MCF 10A (cell line): ENCODE measurements at regions of chr2 and their contacts with region 1.

Region 1: GRCh38 chr2:173571021-173571882 is 216.6 kb downstream of the CDCA7 start:
- DNase-seq: peak; percentile 54
- H3K4me3 Mint-ChIP-seq: no peak overlapping the region
- H3K27ac Mint-ChIP-seq: no peak overlapping the region
- H3K4me1 Mint-ChIP-seq: peaks cover 15% of the 10 kb centered on the region
- H3K27me3 Mint-ChIP-seq: no peaks in the 10 kb centered on the region
- CTCF ChIP-seq: peak; percentile 47

Region 2: GRCh38 chr2:173402405-173402974 is 168.8 kb before region 1 on chr2:
- CTCF ChIA-PET with region 1: interaction called, 14 read pairs
- POLR2A ChIA-PET with region 1: interaction called, 7 read pairs
- intact Hi-C with region 1: loop called (anchors 1 kb)
- DNase-seq: peak; percentile 87
- H3K4me3 Mint-ChIP-seq: peak overlapping the region; percentile 6
- H3K27ac Mint-ChIP-seq: no peak overlapping the region
- H3K4me1 Mint-ChIP-seq: peaks cover 11% of the 10 kb centered on the region
- H3K27me3 Mint-ChIP-seq: peaks cover 64% of the 10 kb centered on the region
- CTCF ChIP-seq: peak; percentile 86

Region 3: GRCh38 chr2:173667417-173667816 is 96.2 kb after region 1 on chr2:
- CTCF ChIA-PET with region 1: interaction called, 3 read pairs
- POLR2A ChIA-PET with region 1: no interaction called
- intact Hi-C with region 1: loop called (anchors 1 kb)
- DNase-seq: peak; percentile 65
- H3K4me3 Mint-ChIP-seq: no peak overlapping the region
- H3K27ac Mint-ChIP-seq: peak overlapping the region; percentile 9
- H3K4me1 Mint-ChIP-seq: peaks cover 8% of the 10 kb centered on the region
- H3K27me3 Mint-ChIP-seq: no peaks in the 10 kb centered on the region
- CTCF ChIP-seq: peak; percentile 9

Region 4: DNA sequence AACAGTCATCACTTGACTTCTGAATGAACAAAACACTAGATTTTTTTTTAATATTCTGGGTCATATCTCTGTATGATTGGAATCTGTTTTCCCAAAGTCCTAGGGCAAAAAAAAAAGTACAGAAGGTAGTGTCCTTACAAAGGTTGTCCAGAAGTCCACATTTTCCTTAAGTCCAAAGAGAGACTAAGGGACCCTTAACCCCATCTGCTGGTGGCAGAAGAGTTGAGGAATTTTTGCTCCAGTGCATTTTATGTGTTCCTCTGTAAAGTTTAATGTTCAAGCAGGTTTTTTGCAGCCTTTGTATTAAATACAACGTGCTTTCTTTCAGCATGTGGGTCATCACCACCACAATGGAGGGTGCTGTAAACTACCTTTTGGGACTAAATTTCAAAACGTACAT is 178.1 kb after region 1 on chr2:
- CTCF ChIA-PET with region 1: interaction called, 3 read pairs
- POLR2A ChIA-PET with region 1: no interaction called
- intact Hi-C with region 1: loop called (anchors 1 kb)
- DNase-seq: peak; percentile 44
- H3K4me3 Mint-ChIP-seq: no peak overlapping the region
- H3K27ac Mint-ChIP-seq: no peak overlapping the region
- H3K4me1 Mint-ChIP-seq: no peaks in the 10 kb centered on the region
- H3K27me3 Mint-ChIP-seq: no peaks in the 10 kb centered on the region
- CTCF ChIP-seq: peak; percentile 45

Region 5: GRCh38 chr2:173884025-173884802 is 313.0 kb after region 1 on chr2:
- CTCF ChIA-PET with region 1: no interaction called
- POLR2A ChIA-PET with region 1: no interaction called
- intact Hi-C with region 1: loop called (anchors 5 kb)
- DNase-seq: peak; percentile 68
- H3K4me3 Mint-ChIP-seq: no peak overlapping the region
- H3K27ac Mint-ChIP-seq: no peak overlapping the region
- H3K4me1 Mint-ChIP-seq: no peaks in the 10 kb centered on the region
- H3K27me3 Mint-ChIP-seq: no peaks in the 10 kb centered on the region
- CTCF ChIP-seq: peak; percentile 67

Region 6: GRCh38 chr2:174078275-174078674 is 507.0 kb after region 1 on chr2:
- CTCF ChIA-PET with region 1: no interaction called
- POLR2A ChIA-PET with region 1: no interaction called
- intact Hi-C with region 1: loop called (anchors 10 kb)
- DNase-seq: peak; percentile 9
- H3K4me3 Mint-ChIP-seq: no peak overlapping the region
- H3K27ac Mint-ChIP-seq: no peak overlapping the region
- H3K4me1 Mint-ChIP-seq: no peaks in the 10 kb centered on the region
- H3K27me3 Mint-ChIP-seq: no peaks in the 10 kb centered on the region
- CTCF ChIP-seq: peak; percentile 24

Region 7: DNA sequence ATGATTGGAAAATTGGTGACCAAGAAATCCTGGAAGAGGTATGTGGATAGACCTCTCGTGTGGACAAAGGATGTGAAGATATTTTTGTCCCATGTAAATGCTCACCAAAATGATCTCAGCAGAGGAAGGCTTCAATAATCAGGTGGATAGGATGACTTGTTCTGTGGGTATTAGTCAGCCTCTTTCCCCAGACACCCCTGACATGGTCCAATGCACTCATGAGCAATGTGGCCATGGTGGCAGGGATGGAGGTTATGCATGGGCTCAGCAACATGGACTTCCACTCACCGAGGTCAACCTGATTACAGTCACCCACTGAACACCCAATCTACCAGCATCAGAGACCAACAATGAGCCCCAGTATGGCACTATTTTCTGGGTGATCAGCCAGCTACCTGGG is 1172.9 kb after region 1 on chr2:
- CTCF ChIA-PET with region 1: no interaction called
- POLR2A ChIA-PET with region 1: no interaction called
- intact Hi-C with region 1: no loop called
- DNase-seq: no peak
- H3K4me3 Mint-ChIP-seq: no peak overlapping the region
- H3K27ac Mint-ChIP-seq: no peak overlapping the region
- H3K4me1 Mint-ChIP-seq: peaks cover 4% of the 10 kb centered on the region
- H3K27me3 Mint-ChIP-seq: no peaks in the 10 kb centered on the region
- CTCF ChIP-seq: no peak